Natural killer cell (primary cell): ENCODE measurements at regions of chr17 and their contacts with region 1.

Region 1: DNA sequence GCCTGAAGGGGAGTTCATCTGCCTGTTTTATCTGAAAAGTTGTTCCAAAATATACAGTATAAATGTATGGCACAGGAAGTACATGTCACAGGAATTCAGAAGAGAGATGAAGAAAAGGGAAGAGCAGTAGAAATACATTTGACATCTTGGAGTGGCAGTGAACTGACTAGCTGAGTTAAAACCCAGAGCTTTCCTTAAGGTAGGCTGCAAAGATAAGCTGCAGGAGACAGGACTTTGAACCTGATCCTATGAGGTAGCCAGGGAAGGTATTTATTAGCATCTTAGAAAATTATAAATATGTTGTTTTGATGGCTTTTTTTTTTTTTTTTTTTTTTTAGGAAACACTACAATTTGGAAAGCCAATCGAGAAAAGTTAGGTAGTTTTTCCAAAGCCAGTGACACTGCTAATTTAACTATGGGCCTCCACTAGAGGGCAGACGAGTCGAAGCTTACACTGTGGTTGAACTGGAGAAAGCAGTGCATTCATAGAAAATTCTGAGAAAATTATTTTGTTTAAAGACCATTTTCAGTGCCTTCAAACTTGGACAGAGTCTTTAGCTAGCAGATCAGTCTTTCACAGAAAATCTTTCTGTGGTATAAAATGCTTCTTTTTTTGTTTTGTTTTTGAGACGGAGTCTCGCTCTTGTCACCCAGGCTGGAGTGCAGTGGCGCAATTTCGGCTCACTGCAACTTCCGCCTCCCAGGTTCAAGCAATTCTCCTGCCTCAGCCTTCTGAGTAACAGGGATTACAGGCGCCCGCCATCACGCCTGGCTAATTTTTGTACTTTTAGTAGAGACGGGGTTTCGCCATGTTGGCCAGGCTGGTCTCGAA is 122.3 kb downstream of the SSH2 start:
- DNase-seq: peak; percentile 43 to 85
- ATAC-seq: peak; percentile 78 to 88 (median 83)
- H3K4me3 ChIP-seq: no peak overlapping the region
- H3K4me3 Mint-ChIP-seq: no peak overlapping the region
- H3K27ac ChIP-seq: no peak overlapping the region
- H3K27ac Mint-ChIP-seq: no peak overlapping the region
- H3K4me1 ChIP-seq: no peaks in the 10 kb centered on the region
- H3K4me1 Mint-ChIP-seq: peaks cover 0 to 5% of the 10 kb centered on the region in 2 donors
- H3K27me3 ChIP-seq: no peaks in the 10 kb centered on the region
- H3K27me3 Mint-ChIP-seq: no peaks in the 10 kb centered on the region
- CTCF ChIP-seq: peak; percentile 91

Region 2: GRCh38 chr17:29905086-29905878 is 97.5 kb after region 1 on chr17:
- intact Hi-C with region 1: no loop called
- DNase-seq: no peak
- ATAC-seq: peak in 1 of 3 donors; percentile 21
- H3K4me3 ChIP-seq: no peak overlapping the region
- H3K4me3 Mint-ChIP-seq: no peak overlapping the region
- H3K27ac ChIP-seq: no peak overlapping the region
- H3K27ac Mint-ChIP-seq: peak overlapping the region in 1 of 2 donors; percentile 10
- H3K4me1 ChIP-seq: no peaks in the 10 kb centered on the region
- H3K4me1 Mint-ChIP-seq: peaks cover 43 to 46% of the 10 kb centered on the region in 2 donors
- H3K27me3 ChIP-seq: no peaks in the 10 kb centered on the region
- H3K27me3 Mint-ChIP-seq: no peaks in the 10 kb centered on the region
- CTCF ChIP-seq: no peak

Region 3: DNA sequence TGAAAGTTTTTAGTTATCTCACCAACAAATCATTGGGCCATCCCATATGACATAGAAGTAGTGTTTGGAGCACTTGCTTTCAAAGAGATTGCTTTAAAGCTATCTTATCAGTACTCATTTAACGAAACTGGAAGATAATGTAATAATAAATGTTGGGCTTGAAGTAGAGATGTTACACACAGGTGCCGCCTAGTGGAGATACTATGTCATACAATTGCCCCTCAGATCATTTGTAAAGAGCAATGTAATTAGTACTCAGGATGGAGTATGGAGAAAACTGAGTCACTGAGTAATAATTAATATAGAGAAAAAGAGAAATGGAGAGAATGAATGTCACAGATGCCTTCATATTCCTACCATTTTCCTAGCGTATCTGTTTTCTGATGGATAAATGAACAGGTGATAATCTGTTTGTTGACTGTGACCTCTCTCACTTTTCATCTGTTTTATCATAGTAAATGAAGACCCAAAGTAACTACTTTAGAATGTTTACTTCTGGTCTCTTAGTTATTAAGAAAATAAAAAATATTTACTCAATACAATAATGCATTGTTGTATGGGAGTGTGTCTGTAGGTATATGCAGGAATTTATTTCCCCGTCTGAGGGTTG is 214.1 kb after region 1 on chr17:
- intact Hi-C with region 1: loop called (anchors 1 kb)
- DNase-seq: peak in 1 of 2 donors; percentile 73
- ATAC-seq: peak; percentile 73 to 78 (median 76)
- H3K4me3 ChIP-seq: no peak overlapping the region
- H3K4me3 Mint-ChIP-seq: no peak overlapping the region
- H3K27ac ChIP-seq: no peak overlapping the region
- H3K27ac Mint-ChIP-seq: no peak overlapping the region
- H3K4me1 ChIP-seq: no peaks in the 10 kb centered on the region
- H3K4me1 Mint-ChIP-seq: no peaks in the 10 kb centered on the region
- H3K27me3 ChIP-seq: peaks cover 2% of the 10 kb centered on the region
- H3K27me3 Mint-ChIP-seq: peaks cover 0 to 3% of the 10 kb centered on the region in 2 donors
- CTCF ChIP-seq: peak; percentile 90

Region 4: DNA sequence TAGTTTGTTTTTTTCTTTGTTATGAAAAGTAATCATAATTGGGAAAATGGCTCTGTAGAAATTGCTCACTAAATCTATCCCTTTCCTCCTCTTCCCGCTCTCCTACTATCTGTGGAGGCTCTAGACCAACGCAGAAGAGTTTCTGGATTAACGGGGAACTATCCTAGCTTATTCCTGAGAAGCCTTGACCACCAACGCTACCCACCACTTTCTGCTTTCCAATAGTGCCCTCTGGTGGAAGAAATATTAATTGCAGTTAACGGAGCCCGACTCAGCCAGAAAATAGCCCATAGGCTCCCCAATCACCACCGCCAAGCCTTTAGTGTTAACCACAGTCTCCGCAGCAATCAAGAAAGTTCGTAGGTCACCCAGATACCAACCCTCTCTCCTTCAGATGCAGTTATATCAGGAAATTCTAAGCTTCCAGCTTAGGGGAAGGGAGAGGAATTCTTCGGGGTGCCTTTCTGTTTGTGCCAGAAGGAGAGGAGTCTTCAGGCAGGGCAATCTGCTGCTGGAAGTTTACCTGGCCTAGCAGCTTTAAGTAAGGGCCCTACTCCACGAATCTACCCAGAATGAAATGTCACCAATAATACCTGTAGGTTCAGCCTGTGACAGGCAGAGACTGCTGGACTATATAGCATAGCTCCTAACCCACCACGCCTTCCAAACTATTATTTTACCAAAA is 285.9 kb after region 1 on chr17:
- intact Hi-C with region 1: loop called (anchors 2 kb)
- DNase-seq: peak in 1 of 2 donors; percentile 76
- ATAC-seq: peak; percentile 74 to 80 (median 80)
- H3K4me3 ChIP-seq: no peak overlapping the region
- H3K4me3 Mint-ChIP-seq: no peak overlapping the region
- H3K27ac ChIP-seq: no peak overlapping the region
- H3K27ac Mint-ChIP-seq: no peak overlapping the region
- H3K4me1 ChIP-seq: peaks cover 4% of the 10 kb centered on the region
- H3K4me1 Mint-ChIP-seq: peaks cover 8 to 9% of the 10 kb centered on the region in 2 donors
- H3K27me3 ChIP-seq: peaks cover 2% of the 10 kb centered on the region
- H3K27me3 Mint-ChIP-seq: peaks cover 35 to 40% of the 10 kb centered on the region in 2 donors
- CTCF ChIP-seq: peak; percentile 88